Right lobe of liver (tissue), 6 donors: ENCODE measurements at regions of chr6 and their contacts with region 1.

Region 1: GRCh38 chr6:13487122-13488014 is at the start of gene GFOD1:
- DNase-seq: peak; percentile 93 to 95 (median 93)
- ATAC-seq: peak; percentile 73 to 88 (median 80)
- H3K4me3 ChIP-seq: peak within 1 kb of the TSS; percentile 68 to 89 (median 86)
- H3K27ac ChIP-seq: peak within 1 kb of the TSS; percentile 88 to 96 (median 90)
- H3K4me1 ChIP-seq: peaks cover 0 to 26% (median 4%) of the 10 kb centered on the region in 4 donors
- H3K27me3 ChIP-seq: no peaks in the 10 kb centered on the region
- CTCF ChIP-seq: peak in 1 of 4 donors; percentile 10
- POLR2A ChIP-seq: peak; percentile 97
- total RNA-seq, gene GFOD1: 5.4 to 8.5 (median 7.5) TPM

Region 2: DNA sequence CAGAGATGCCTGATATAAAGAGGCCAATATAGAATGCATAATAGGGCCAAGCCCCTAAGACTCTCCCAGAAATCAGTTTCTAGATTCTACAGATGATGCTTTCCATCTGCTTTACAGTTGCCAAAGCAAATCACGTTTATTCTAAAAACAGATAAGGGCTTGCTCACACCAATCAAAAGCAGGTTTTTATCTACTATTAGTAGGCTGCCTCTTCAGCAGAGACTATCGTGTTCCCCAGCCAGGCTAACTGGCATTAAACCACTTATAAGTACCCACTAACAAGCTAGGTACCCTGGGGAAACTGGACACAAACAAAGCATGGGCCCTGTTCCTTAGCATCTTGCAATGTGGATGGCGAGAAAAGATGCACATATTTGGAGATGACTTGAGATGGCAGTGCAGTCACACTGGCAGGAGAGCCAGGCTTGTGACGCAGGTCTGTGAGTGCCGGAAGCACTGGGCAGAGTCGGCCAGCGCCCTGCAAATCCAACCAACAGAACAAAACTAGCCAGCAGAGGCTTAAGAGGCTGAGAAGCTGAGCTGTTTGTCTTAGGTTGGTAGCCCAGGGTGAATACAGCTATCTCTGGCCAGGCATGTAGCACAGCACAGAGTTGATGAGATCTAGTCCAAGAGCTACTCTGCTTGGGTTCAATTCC is 73.3 kb before region 1 on chr6:
- intact Hi-C with region 1: loop called in 1 of 2 experiments (anchors 10 kb)
- DNase-seq: peak; percentile 45 to 77 (median 70)
- ATAC-seq: peak; percentile 36 to 57 (median 50)
- H3K4me3 ChIP-seq: no peak overlapping the region
- H3K27ac ChIP-seq: peak overlapping the region in 2 of 3 donors; percentile 59 to 92
- H3K4me1 ChIP-seq: peaks cover 0 to 82% (median 33%) of the 10 kb centered on the region in 4 donors
- H3K27me3 ChIP-seq: no peaks in the 10 kb centered on the region
- CTCF ChIP-seq: peak in 1 of 4 donors; percentile 37
- POLR2A ChIP-seq: no peak

Region 3: DNA sequence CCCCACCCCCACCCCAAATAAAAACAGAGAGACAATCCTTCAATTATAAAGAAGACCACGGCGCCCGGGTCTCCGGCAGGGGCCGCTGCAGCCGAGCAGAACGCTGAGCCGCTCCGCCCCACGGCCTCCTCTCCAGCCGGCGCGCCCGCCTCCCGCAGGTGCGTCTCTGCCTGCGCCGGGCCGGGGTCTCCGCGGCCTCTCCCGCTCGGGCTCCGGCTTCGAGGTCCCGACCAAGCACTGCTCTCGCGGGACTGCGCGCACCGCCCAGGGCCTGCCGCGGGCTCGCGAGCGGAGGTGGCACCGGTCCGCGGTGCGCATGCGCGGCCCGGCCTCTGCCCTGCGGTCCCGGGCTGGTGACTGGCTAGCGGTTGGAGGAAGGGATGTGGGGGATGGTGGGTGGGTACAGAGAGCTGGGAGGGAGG is 86.8 kb after region 1 on chr6:
- intact Hi-C with region 1: loop called in 1 of 2 experiments (anchors 10 kb)
- DNase-seq: peak; percentile 96 to 98 (median 96)
- ATAC-seq: peak; percentile 88 to 95 (median 90)
- H3K4me3 ChIP-seq: peak overlapping the region; percentile 77 to 89 (median 89)
- H3K27ac ChIP-seq: peak overlapping the region; percentile 95 to 98 (median 96)
- H3K4me1 ChIP-seq: peaks cover 0 to 45% (median 6%) of the 10 kb centered on the region in 4 donors
- H3K27me3 ChIP-seq: no peaks in the 10 kb centered on the region
- CTCF ChIP-seq: peak; percentile 47 to 52 (median 48)
- POLR2A ChIP-seq: peak; percentile 85